ENCODE measurements at regions of chr20 and their contacts with region 1.

Region 1: GRCh38 chr20:49219089-49219923 is at the start of gene DDX27:
- DNase-seq: peak; percentile 94 to 99 (median 98)

Region 2: DNA sequence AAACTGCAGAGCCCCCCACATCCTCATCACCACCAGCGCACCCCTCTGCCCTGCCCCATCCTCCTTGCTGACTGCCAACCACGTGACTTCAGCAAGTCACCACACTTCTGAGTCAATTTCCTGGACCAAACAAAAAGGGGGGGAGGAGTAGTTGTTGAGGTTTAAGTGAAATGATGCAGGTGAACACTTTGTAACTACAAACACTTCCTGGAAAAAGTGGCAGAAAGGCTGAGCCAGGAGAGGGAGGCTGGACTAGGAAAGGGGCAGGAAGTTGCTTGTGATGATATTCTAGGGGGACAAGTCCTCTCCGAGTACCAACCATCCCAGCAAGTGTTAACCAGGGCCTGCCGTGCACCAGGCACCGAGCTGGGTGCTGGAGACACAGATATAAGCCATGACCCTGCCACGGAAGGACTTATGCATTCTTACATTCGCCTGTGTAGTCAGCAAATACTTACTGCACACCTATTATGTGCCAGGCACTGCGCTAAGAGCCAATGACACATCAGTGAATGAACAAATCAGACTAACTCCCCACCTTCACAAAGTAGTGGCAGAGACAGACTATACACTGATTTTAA is 458.8 kb before region 1 on chr20:
- intact Hi-C with region 1: no loop called
- DNase-seq: peak in 1 of 10 donors; percentile 55

Region 3: GRCh38 chr20:48889144-48890114 is 329.9 kb before region 1 on chr20:
- intact Hi-C with region 1: no loop called
- DNase-seq: no peak

Region 4: DNA sequence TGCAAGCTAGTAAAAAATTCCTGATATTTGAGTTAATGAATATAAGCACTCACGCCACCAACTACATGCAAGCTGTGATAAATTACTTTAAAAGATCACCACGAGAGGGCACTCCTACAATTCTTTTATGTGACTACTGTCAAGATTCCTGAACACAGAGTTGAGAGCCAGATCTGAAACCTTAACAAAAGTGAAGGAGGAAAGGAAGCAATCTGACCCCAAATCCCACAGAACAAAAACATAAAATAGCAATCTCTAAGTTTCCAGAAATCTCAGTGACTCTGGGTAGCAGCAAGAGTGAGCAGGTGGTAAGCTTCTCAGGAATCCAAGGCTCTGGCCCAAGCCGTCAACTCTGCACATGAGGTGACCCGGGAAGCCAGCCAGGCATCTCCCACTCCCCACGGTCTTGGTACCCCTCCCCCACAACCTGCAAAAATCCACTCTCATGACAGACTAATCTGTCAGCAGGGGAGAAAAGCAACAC is 86.3 kb before region 1 on chr20:
- intact Hi-C with region 1: loop called (anchors 1 kb)
- DNase-seq: no peak

Region 5: DNA sequence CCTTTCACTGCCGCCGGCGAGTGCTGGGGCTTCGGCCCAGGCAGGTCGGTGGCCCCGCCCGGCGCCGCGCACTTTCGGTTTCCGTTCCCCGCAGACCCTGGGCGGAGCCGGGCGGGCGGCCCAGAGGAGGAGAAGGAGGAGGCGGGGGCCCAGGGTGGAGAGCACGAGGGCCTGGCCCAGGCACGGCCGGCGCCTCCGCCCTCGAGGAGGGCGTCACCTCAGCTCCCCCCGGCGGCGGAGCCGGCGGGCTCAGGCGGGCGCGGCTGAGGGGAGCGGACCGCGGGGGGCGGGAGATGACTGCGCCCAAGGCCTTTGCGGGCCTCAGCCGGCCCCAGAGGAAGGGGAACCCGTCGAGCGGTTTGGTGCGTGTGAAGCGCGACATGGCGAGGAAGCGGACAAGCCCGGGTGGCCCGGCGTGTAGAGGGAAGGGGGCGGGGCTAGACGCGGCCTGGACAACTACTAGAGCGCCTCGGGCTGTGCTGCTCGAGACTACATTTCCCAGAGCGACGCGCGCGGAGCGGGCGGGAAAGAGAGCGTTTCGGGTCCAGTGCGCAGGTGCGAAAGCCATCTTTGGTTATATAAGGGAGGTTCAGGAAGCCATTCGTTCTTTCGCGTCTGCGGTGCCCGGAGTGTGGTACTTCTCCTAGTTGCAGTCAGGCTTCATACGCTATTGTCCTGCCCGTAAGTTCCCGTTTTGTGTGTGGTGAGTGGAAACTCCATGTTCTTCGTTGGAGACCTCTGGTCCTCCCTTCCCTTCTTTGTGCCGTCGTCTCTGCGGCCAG is 58.9 kb after region 1 on chr20 and contains the start of gene ZNFX1:
- intact Hi-C with region 1: loop called (anchors 2 kb)
- DNase-seq: peak; percentile 96 to 100 (median 98)

Measured in posterior cingulate gyrus (tissue), 11 donors.